Left ventricle myocardium inferior (tissue), 1 donor: ENCODE measurements at regions of chr19 and their contacts with region 1.

Region 1: GRCh38 chr19:12139885-12140547 is at the start of gene ZNF20:
- DNase-seq: peak; percentile 96
- H3K4me3 ChIP-seq: peak within 1 kb of the TSS; percentile 94
- H3K27ac ChIP-seq: peak within 1 kb of the TSS; percentile 86
- H3K4me1 ChIP-seq: peaks cover 30% of the 10 kb centered on the region
- H3K27me3 ChIP-seq: no peaks in the 10 kb centered on the region
- CTCF ChIP-seq: no peak
- total RNA-seq, gene ZNF20: 2.2 TPM

Region 2: GRCh38 chr19:12064590-12065538 is 75.2 kb before region 1 on chr19 and contains the start of gene ZNF844:
- intact Hi-C with region 1: loop called (anchors 5 kb)
- DNase-seq: peak; percentile 99
- H3K4me3 ChIP-seq: peak within 1 kb of the TSS; percentile 79
- H3K27ac ChIP-seq: peak within 1 kb of the TSS; percentile 95
- H3K4me1 ChIP-seq: peaks cover 32% of the 10 kb centered on the region
- H3K27me3 ChIP-seq: no peaks in the 10 kb centered on the region
- CTCF ChIP-seq: no peak
- total RNA-seq, gene ZNF844: 16.4 TPM

Region 3: GRCh38 chr19:12090807-12091206 is 49.2 kb before region 1 on chr19:
- intact Hi-C with region 1: loop called (anchors 2 kb)
- DNase-seq: peak; percentile 57
- H3K4me3 ChIP-seq: no peak overlapping the region
- H3K27ac ChIP-seq: peak overlapping the region; percentile 79
- H3K4me1 ChIP-seq: peaks cover 24% of the 10 kb centered on the region
- H3K27me3 ChIP-seq: no peaks in the 10 kb centered on the region
- CTCF ChIP-seq: peak; percentile 75

Region 4: DNA sequence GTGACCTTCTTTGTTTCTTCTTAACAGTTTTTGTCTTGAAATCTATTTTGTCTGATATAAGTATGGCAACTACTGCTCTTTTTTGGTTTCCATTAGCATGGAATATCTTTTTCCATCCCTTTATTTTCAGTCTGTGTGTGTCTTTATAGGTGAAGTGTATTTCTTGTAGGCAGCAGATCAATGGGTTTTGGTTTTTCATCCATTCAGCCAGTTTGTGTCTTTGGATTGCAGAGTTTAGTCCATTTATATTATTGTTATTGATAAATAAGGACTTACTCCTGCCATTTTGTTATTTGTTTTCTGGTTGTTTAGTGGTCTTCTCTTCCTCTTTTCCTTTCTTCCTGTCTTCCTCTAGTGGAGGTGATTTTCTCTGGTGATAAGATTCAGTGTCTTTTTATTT is 77.3 kb after region 1 on chr19:
- intact Hi-C with region 1: no loop called
- DNase-seq: no peak
- H3K4me3 ChIP-seq: no peak overlapping the region
- H3K27ac ChIP-seq: no peak overlapping the region
- H3K4me1 ChIP-seq: no peaks in the 10 kb centered on the region
- H3K27me3 ChIP-seq: no peaks in the 10 kb centered on the region
- CTCF ChIP-seq: no peak